Sciatic nerve (tissue), 2 donors: ENCODE measurements at regions of chr11 and their contacts with region 1.

Region 1: DNA sequence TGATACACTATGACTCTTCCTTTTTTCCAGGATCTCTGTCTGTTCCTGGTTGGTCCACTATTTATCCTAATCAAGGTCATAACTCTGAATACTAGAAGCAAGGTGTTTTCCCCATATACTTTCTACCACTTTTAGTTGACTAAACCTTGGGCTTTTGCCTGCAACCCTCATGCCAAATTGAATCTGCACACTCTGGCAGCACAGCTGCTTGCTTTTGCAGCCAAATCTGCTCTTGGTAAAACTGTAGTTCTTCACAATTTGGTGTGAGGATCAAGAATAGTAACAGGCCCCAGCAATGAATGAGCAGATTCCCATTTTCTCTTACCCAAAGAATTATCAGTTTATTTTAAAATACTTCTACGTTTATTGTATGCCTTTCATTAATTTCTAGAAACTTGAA is 586.5 kb upstream of the CNTN5 start:
- DNase-seq: no peak
- ATAC-seq: no peak

Region 2: DNA sequence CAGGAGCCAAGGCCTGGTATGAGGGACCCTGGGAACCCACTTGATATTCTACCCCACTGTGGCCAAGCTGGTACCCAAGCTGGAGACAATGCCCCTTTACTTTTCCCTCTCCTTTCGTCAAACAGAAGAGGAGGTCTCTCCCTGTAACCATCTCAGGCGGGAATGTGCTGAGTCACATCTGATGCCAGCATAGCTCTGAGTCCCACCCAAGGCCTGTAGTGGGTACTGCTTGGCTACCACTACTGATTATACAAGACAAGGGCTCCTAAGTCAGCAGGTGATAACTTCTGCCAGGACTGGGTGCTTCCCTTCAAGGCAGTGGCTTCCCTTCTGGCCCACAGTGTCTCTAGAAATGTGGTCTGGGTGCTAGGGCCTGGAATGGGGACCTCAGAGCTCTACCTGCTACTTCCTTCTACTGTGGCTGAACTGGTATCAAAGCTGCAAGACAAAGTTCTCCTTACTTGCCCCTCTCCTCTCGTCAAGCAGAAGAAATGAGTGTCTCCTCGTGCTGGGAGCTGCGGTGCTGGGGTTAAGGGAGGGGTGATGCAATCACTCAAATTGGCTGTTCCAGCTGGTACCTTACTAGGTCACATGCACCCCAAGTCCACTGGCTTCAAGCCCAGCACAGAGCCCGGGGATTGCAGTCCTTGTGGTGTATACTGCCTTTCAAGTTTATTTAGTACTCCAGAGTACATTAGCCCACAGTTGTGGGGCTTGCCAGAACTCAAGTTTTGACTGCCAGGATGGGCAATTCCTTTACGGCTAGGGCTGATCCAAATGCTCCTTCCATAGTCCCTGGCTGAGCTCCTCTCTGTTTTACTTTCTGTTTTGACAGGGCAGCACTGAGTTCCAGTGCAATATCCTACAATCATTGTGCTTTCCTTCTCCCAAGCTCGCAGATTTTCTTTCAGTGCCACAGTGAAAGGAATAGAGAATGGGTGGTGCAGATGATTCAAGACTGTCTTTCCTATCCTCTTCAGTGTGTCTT is 166.8 kb after region 1 on chr11:
- intact Hi-C with region 1: loop called (anchors 5 kb)
- DNase-seq: no peak
- ATAC-seq: no peak

Region 3: GRCh38 chr11:99979042-99979441 is 1544.7 kb after region 1 on chr11:
- intact Hi-C with region 1: no loop called
- DNase-seq: no peak
- ATAC-seq: no peak